Mucosa of descending colon (tissue), 3 donors: ENCODE measurements at regions of chr4 and their contacts with region 1.

Region 1: GRCh38 chr4:112327965-112328733 is 31.0 kb downstream of the ALPK1 start:
- DNase-seq: no peak
- ATAC-seq: no peak
- H3K4me3 ChIP-seq: no peak overlapping the region
- H3K4me1 ChIP-seq: no peaks in the 10 kb centered on the region
- CTCF ChIP-seq: no peak

Region 2: DNA sequence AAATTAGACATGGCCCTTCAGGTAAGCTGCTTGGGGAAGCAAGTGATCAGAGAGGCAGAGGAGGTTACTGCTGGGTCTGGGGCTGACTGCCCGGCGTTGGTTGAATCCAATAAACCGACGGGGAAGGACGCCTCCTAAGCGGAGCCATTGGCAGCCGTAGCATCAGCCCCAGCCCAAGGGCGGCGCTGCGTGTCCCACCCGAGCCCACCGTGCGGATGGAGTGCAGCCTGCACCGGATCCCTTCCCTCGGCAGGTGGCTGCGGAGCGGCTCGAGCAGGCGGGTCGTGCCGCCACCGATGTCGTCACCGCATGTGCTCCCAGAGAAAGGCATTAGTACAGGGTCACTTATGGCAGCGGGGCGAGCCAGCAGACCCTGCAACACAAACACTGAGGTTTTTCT is 51.2 kb after region 1 on chr4:
- intact Hi-C with region 1: no loop called
- DNase-seq: no peak
- ATAC-seq: no peak
- H3K4me3 ChIP-seq: no peak overlapping the region
- H3K4me1 ChIP-seq: no peaks in the 10 kb centered on the region
- CTCF ChIP-seq: no peak

Region 3: DNA sequence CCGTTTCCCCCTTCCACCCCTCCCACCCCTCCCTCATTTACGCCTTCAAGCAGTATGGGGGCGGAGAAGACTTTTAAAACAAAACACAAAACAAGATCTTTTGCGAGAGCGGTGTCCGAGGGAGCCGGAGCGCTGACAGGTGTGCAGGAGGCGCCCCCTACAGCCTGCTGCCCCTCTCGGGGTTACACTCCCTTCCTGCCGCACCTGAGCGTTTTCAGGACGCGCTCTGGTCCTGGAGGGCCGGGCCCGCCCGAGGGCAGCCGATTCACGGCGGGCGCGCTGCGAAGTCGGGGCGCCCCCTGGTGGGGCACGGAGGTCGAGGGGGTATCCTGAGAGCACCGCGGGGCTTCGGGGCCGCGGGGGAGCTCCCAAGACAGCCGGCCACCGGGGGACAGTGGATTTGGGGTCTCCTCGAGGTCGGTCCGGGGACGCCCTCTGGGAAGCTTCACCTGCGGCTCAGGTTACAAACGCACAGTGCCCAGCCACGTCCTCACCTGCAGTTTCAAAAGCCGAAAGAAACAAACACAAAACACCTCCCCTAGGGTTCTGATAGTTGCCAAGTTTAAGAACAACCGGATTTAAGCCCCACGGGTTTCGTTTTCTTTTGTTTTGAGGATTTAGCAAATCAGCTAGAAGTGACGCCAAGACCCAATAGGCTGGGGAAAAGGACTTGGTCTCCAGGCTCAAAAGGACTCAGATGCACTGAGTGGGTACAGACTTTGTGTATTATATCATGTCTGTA is 195.8 kb after region 1 on chr4:
- intact Hi-C with region 1: loop called in 1 of 2 experiments (anchors 10 kb)
- DNase-seq: peak; percentile 65 to 80 (median 65)
- ATAC-seq: peak; percentile 95
- H3K4me3 ChIP-seq: no peak overlapping the region
- H3K4me1 ChIP-seq: peaks cover 20% of the 10 kb centered on the region
- CTCF ChIP-seq: peak; percentile 52

Region 4: DNA sequence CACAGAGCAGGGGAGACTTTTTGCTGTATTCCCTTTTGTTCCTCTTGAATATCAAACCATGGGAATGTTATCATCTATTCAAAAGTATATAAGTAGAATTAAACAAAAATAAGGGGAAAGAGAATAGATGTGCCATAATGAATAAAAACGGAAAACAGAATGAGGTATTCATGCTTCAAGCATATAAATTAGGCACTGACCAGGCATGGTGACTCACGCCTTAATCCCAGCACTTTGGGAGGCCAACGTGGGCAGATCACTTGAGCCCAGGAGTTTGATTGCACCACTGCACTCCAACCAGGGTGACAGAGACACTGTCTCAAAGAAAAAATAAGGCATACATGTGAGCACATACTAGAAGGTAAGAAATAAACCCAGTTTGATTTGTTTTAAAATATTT is 204.1 kb after region 1 on chr4:
- intact Hi-C with region 1: loop called (anchors 10 kb)
- DNase-seq: no peak
- ATAC-seq: no peak
- H3K4me3 ChIP-seq: no peak overlapping the region
- H3K4me1 ChIP-seq: no peaks in the 10 kb centered on the region
- CTCF ChIP-seq: no peak